Common myeloid progenitor, CD34-positive (primary cell): ENCODE measurements at regions of chr1 and their contacts with region 1.

Region 1: GRCh38 chr1:147273409-147274336 is 31.2 kb downstream of the CHD1L start:
- DNase-seq: peak; percentile 63 to 86 (median 81)
- H3K4me3 ChIP-seq: no peak overlapping the region
- H3K27ac ChIP-seq: no peak overlapping the region
- H3K4me1 ChIP-seq: no peaks in the 10 kb centered on the region
- H3K27me3 ChIP-seq: no peaks in the 10 kb centered on the region

Region 2: DNA sequence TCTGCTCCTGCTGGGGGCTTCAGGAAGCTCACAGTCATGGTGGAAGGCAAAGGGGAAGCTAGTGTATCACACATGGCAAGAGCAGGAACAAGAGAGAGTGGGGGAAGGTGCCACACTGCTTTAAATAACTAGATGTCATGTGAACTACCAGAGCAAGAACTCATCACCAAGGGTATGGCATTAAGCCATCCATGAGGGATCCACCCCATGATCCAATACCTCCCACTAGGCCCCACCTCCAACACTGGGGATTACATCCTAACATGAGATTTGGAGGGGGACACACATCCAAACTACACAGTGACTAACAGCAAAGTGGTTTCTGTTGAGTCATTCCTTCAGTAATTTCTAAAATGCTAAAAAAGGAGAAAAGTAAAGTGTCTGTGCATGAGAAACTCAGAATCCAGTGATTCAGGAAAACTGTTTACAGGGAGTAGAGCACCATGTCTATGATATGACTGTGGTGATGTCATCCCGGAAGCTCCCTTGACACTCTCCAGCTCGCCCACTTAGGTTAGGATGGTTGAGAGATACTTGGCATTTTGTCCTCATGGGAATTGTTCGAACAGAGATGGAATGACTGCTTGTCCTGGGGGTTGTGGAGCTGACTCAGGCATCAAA is 19.1 kb after region 1 on chr1:
- CTCF ChIA-PET with region 1: interaction called, 23 read pairs
- POLR2A ChIA-PET with region 1: no interaction called
- DNase-seq: peak in 2 of 3 donors; percentile 64 to 70
- H3K4me3 ChIP-seq: no peak overlapping the region
- H3K27ac ChIP-seq: no peak overlapping the region
- H3K4me1 ChIP-seq: peaks cover 0 to 11% (median 3%) of the 10 kb centered on the region in 4 experiments
- H3K27me3 ChIP-seq: no peaks in the 10 kb centered on the region